AG04449 (cell line): ENCODE measurements at regions of chr21 and their contacts with region 1.

Region 1: GRCh38 chr21:31580866-31581276 is 78.6 kb upstream of the SOD1 start:
- DNase-seq: no peak
- H3K4me3 ChIP-seq: no peak overlapping the region
- CTCF ChIP-seq: peak; percentile 84

Region 2: DNA sequence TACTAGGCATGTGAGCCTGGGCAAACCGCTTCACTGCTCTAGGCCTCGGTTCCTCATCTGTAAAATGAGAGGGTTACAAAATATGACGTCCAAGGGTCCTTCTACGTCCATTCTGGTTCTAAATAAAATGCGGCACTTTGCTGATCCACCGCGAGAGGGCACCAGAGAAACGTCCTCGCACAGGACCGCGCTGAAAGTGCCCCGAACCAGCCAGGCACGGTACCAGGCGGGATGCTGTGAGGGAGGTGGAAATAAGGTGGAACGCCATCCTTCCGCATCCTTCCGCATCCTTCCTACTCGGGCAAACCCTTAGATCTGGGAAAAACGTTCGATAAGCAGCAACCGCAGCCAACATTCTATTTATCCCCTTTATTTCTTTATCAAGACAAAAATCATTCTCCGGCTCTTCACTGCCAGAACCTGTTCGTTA is 482.3 kb before region 1 on chr21:
- CTCF ChIA-PET with region 1: interaction called, 17 read pairs
- POLR2A ChIA-PET with region 1: no interaction called
- DNase-seq: no peak
- H3K4me3 ChIP-seq: no peak overlapping the region
- CTCF ChIP-seq: peak; percentile 90

Region 3: GRCh38 chr21:31180256-31181081 is 400.4 kb before region 1 on chr21:
- CTCF ChIA-PET with region 1: interaction called, 33 read pairs
- POLR2A ChIA-PET with region 1: no interaction called
- DNase-seq: no peak
- H3K4me3 ChIP-seq: no peak overlapping the region
- CTCF ChIP-seq: peak; percentile 46

Region 4: GRCh38 chr21:31198575-31198974 is 382.3 kb before region 1 on chr21:
- CTCF ChIA-PET with region 1: interaction called, 262 read pairs
- POLR2A ChIA-PET with region 1: no interaction called
- DNase-seq: peak; percentile 10
- H3K4me3 ChIP-seq: no peak overlapping the region
- CTCF ChIP-seq: peak; percentile 25

Region 5: GRCh38 chr21:31343680-31344480 is 237.0 kb before region 1 on chr21 and contains the start of gene TIAM1:
- CTCF ChIA-PET with region 1: interaction called, 33 read pairs
- POLR2A ChIA-PET with region 1: no interaction called
- DNase-seq: peak; percentile 23
- H3K4me3 ChIP-seq: peak within 1 kb of the TSS; percentile 75
- CTCF ChIP-seq: no peak

Region 6: GRCh38 chr21:31526040-31526439 is 54.8 kb before region 1 on chr21:
- CTCF ChIA-PET with region 1: no interaction called
- POLR2A ChIA-PET with region 1: no interaction called
- DNase-seq: no peak
- H3K4me3 ChIP-seq: no peak overlapping the region
- CTCF ChIP-seq: no peak

Region 7: DNA sequence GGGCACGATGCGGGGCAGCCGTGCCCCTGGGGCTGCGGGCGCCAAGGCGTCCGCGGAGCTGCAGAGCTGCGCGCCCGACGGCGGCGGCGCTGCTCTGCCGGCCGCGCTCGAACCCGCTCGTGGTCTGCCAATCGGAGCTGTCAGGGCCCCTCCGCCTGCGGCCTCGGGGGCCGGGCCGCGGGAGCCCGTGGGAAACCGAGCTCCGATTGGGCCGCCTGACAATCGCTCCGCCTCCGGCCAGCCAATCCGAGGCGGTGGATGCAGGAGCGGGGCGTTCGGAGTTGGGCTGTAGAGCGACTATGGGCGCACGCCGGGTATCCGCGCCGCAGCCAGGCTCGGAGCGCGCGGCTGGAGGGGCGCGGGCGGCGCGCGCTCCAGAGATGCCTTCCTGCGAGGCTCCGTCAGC is 21.9 kb before region 1 on chr21:
- CTCF ChIA-PET with region 1: interaction called, 37 read pairs
- POLR2A ChIA-PET with region 1: no interaction called
- DNase-seq: peak; percentile 56
- H3K4me3 ChIP-seq: peak overlapping the region; percentile 70
- CTCF ChIP-seq: peak; percentile 37

Region 8: DNA sequence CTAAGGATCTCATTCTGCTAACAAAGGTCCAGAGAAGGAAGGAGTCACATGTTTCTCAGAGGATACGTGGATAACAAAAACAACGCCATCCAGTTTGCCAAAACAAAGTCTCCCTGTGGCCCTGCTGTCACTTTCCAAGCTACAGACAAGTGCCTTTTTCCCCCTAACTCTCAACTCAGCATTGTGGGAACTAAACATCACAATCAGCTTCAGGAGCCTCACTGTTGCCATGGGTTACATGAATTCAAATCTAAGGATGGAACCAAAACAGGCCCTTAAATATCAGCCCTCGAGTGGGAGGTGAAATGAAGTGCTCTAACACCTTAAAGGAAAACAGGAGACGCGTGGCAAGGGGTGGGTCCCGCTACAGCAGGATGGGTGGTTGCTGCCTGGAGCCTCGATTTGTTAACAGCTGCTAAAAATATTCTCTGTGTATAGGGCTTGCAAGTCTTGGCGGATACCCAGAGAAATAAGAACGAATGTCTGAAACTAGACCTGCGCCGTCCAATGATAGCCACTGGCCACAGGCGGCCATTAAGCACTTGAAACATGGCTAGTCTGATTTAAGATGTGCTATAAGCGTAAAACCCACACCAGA is 12.2 kb after region 1 on chr21:
- CTCF ChIA-PET with region 1: interaction called, 23 read pairs
- POLR2A ChIA-PET with region 1: no interaction called
- DNase-seq: no peak
- H3K4me3 ChIP-seq: no peak overlapping the region
- CTCF ChIP-seq: no peak